PC-3 (cell line): ENCODE measurements at regions of chr18 and their contacts with region 1.

Region 1: GRCh38 chr18:62522504-62523254 is at the start of gene ZCCHC2:
- DNase-seq: peak; percentile 98
- ATAC-seq: peak; percentile 79
- H3K4me3 ChIP-seq: peak within 1 kb of the TSS; percentile 93
- H3K27ac ChIP-seq: peak within 1 kb of the TSS; percentile 86
- H3K4me1 ChIP-seq: peaks cover 28% of the 10 kb centered on the region
- H3K27me3 ChIP-seq: no peaks in the 10 kb centered on the region
- CTCF ChIP-seq: no peak
- total RNA-seq, gene ZCCHC2: 17.3 and 24.9 TPM in 2 replicates

Region 2: GRCh38 chr18:62324917-62325805 is 197.5 kb before region 1 on chr18 and contains the start of gene TNFRSF11A:
- CTCF ChIA-PET with region 1: no interaction called
- POLR2A ChIA-PET with region 1: no interaction called
- intact Hi-C with region 1: loop called (anchors 2 kb)
- DNase-seq: peak; percentile 71
- ATAC-seq: peak; percentile 56
- H3K4me3 ChIP-seq: peak within 1 kb of the TSS; percentile 98
- H3K27ac ChIP-seq: peak within 1 kb of the TSS; percentile 29
- H3K4me1 ChIP-seq: peaks cover 34% of the 10 kb centered on the region
- H3K27me3 ChIP-seq: no peaks in the 10 kb centered on the region
- CTCF ChIP-seq: peak; percentile 38
- total RNA-seq, gene TNFRSF11A: 25.9 and 26.5 TPM in 2 replicates

Region 3: GRCh38 chr18:62450546-62451406 is 71.9 kb before region 1 on chr18:
- CTCF ChIA-PET with region 1: no interaction called
- POLR2A ChIA-PET with region 1: interaction called, 3 read pairs
- intact Hi-C with region 1: loop called (anchors 2 kb)
- DNase-seq: peak; percentile 93
- ATAC-seq: peak; percentile 96
- H3K4me3 ChIP-seq: peak overlapping the region; percentile 21; the same call in 1 of the 2 replicates
- H3K27ac ChIP-seq: peak overlapping the region; percentile 82
- H3K4me1 ChIP-seq: peaks cover 30% of the 10 kb centered on the region
- H3K27me3 ChIP-seq: no peaks in the 10 kb centered on the region
- CTCF ChIP-seq: no peak

Region 4: DNA sequence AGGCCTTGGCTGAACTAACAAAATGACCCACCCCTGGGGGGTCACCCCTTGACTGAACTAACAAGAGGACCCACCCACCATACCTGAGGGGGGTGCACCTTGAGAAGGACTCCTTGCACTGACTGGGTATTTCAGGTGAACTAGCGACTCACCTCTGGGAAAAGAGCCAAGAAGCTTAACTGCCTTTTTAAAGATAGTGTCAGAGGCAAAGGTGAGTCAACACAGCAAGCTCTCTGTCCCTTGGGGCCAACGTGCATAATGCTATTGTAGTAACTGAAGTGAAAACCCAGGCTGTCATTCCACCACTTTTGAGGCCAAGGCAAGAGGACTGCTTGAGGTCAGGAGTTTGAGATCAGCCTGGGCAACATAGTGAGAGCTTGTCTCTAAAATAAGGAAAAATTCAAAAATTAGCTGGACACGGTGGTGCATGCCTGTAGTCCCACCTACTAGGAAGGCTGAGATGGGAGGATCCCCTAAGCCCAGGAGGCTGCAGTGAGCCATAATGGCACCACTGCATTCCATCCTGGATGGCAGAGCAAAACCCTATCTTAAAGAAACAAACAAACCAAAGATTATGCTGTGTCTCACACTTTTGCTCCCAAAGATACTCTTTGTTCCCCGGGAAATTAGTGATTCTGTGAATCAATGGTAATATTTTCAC is 36.2 kb before region 1 on chr18:
- CTCF ChIA-PET with region 1: no interaction called
- POLR2A ChIA-PET with region 1: no interaction called
- intact Hi-C with region 1: loop called (anchors 1 kb)
- DNase-seq: peak; percentile 98
- ATAC-seq: peak; percentile 80
- H3K4me3 ChIP-seq: peak overlapping the region; percentile 58
- H3K27ac ChIP-seq: peak overlapping the region; percentile 96
- H3K4me1 ChIP-seq: peaks cover 25% of the 10 kb centered on the region
- H3K27me3 ChIP-seq: no peaks in the 10 kb centered on the region
- CTCF ChIP-seq: no peak

Region 5: DNA sequence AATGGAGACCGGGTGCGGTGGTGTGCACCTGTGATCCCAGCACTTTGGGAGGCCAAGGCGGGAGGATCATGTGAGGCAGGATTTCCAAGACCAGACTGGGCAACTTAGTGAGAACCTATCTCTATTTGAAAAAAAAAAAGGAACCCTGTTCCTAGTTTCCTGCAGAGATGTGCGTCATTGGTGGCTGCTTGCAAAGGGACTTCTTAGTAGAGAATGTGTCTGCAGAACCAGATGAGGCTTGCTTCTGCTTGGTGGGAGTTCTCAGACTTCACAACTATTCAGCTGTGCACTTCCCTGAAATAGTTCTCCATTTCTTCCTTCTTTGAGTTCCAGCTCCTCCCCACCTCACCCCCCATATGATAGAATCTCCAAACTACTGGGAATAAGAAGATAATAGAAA is 22.4 kb after region 1 on chr18:
- CTCF ChIA-PET with region 1: no interaction called
- POLR2A ChIA-PET with region 1: no interaction called
- intact Hi-C with region 1: no loop called
- DNase-seq: no peak
- ATAC-seq: no peak
- H3K4me3 ChIP-seq: no peak overlapping the region
- H3K27ac ChIP-seq: no peak overlapping the region
- H3K4me1 ChIP-seq: no peaks in the 10 kb centered on the region
- H3K27me3 ChIP-seq: no peaks in the 10 kb centered on the region
- CTCF ChIP-seq: no peak

Region 6: GRCh38 chr18:62555135-62555534 is 32.5 kb after region 1 on chr18:
- CTCF ChIA-PET with region 1: no interaction called
- POLR2A ChIA-PET with region 1: no interaction called
- intact Hi-C with region 1: loop called (anchors 2 kb)
- DNase-seq: peak; percentile 96
- ATAC-seq: peak; percentile 95
- H3K4me3 ChIP-seq: peak overlapping the region; percentile 2; the same call in 1 of the 2 replicates
- H3K27ac ChIP-seq: peak overlapping the region; percentile 48
- H3K4me1 ChIP-seq: peaks cover 18% of the 10 kb centered on the region
- H3K27me3 ChIP-seq: no peaks in the 10 kb centered on the region
- CTCF ChIP-seq: no peak

Region 7: GRCh38 chr18:62566199-62566598 is 43.5 kb after region 1 on chr18:
- CTCF ChIA-PET with region 1: no interaction called
- POLR2A ChIA-PET with region 1: no interaction called
- intact Hi-C with region 1: loop called (anchors 5 kb)
- DNase-seq: peak; percentile 42
- ATAC-seq: peak; percentile 43; the same call in 1 of the 2 replicates
- H3K4me3 ChIP-seq: no peak overlapping the region
- H3K27ac ChIP-seq: no peak overlapping the region
- H3K4me1 ChIP-seq: no peaks in the 10 kb centered on the region
- H3K27me3 ChIP-seq: no peaks in the 10 kb centered on the region
- CTCF ChIP-seq: peak; percentile 42

Region 8: GRCh38 chr18:62584241-62585120 is 61.8 kb after region 1 on chr18:
- CTCF ChIA-PET with region 1: no interaction called
- POLR2A ChIA-PET with region 1: no interaction called
- intact Hi-C with region 1: loop called (anchors 5 kb)
- DNase-seq: peak; percentile 90
- ATAC-seq: peak; percentile 83
- H3K4me3 ChIP-seq: no peak overlapping the region
- H3K27ac ChIP-seq: no peak overlapping the region
- H3K4me1 ChIP-seq: peaks cover 4% of the 10 kb centered on the region
- H3K27me3 ChIP-seq: no peaks in the 10 kb centered on the region
- CTCF ChIP-seq: peak; percentile 97